Dorsolateral prefrontal cortex (tissue), 120 donors: ENCODE measurements at regions of chr11 and their contacts with region 1.

Region 1: DNA sequence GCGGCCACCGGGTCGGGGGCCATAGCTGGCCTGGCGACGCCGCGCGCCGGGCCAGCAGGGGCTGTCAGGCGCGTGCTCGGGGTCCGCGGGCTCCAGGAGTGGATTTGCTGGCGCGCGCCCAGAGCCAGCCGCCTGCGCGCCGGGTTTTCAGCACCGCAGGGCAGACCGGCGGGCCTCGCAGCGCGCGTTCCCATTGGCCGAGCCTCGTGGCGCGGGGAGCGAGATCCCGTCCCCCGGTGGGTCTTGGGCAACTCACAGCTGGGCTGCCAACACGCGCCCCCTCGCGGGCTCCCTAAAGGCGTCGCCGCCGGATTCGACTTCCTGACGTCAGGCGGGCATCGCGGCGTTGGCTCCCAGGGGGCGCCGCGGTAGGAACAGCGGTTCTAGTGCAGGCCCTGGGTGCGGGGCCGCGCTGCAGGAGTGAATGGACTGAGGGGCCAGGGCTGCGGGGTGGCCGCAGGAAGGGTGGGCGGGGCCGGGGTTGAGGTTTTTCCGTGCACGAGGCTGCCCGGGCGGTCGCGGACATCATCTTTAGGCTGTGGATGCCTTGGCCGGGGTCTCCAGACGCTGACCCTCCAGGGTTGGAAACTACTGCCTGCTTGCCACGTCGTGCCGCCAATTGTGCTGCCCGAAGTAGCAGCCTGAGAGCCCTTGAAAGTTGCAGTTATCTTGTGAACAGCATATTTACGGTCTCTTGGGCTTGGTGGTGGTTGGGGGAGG is at the start of gene FADS1:
- DNase-seq: peak; percentile 78 to 98 (median 95)
- H3K4me3 ChIP-seq: peak within 1 kb of the TSS; percentile 55 to 99 (median 87)
- H3K27ac ChIP-seq: peak within 1 kb of the TSS; percentile 91 to 100 (median 99)
- H3K27me3 ChIP-seq: no peaks in the 10 kb centered on the region
- CTCF ChIP-seq: peak; percentile 42 to 89 (median 71)
- total RNA-seq, gene FADS1: 47.3 to 195 (median 80.7) TPM

Region 2: DNA sequence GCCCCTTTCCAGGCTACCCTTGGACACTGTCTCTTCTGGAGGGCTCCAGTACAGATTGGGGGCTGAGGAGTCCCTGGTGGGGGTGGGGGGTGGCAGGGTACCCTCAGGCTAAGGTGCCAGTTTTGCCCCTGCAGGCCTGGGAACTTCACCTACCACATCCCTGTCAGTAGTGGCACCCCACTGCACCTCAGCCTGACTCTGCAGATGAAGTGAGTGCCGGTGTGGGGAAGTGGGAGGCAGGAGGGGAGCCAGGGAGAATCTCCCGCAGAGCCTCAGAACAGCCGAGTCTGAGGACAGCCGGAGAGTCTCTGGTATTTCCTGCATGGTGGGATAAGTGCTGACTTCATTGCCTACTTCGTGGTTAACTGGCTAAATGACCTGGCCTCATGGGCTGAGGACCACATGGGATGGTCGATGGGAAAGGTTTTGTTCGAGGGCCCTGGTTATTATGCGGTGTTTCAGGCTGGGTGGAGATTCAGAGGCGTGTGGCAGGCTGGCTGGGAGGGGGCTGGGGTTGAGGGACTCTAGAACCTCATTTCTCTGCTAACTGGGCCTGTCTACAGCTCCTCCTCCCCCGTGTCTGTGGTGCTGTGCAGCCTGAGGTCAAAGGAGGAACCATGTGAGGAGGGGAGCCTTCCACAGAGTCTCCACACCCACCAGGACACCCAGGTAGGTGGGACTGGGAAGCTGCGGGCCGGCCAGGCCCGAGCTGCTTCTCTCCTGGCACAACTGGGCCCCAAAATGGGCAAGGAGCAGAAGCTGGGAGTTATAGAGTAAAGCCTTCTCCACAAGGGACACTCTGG is 33.0 kb before region 1 on chr11:
- intact Hi-C with region 1: no loop called
- DNase-seq: no peak
- H3K4me3 ChIP-seq: no peak overlapping the region
- H3K27ac ChIP-seq: peak overlapping the region in 34 of 59 donors; percentile 3 to 99 (median 39)
- H3K27me3 ChIP-seq: no peaks in the 10 kb centered on the region
- CTCF ChIP-seq: no peak

Region 3: DNA sequence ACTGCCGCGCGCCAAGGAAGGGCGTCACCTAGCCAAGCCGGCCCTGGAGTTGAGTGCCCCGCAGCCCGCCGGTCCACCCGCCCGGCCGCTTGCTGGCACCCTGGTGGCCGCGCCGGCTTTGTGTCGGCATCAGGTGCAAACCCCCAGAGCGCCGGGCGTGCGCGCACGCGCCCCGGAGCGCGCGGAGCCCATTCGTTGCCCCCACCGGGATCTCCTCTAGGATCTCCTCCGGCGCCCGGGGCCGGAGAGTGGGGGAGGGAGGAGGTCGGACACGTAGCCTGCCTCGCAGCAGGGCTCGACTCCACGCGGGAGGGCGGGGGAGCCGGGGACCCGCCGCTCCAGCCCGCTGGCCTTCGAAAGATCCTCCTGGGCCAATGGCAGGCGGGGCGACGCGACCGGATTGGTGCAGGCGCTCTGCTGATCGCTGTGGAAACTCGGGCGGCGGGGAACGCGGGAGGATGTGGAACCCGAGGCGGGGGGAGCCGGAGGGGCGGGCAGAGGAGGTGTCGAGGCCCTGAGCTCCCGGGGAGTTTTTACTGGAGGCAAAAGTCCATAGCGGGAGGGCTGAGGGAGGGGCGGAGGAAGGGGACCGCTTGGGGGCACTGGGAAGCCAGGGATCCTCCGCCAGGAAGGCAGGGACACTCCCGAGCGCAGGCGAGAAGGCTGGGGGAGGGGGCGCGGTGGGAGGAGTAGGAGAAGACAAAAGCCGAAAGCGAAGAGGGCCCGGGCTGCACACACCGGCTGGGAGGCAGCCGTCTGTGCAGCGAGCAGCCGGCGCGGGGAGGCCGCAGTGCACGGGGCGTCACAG is 10.9 kb after region 1 on chr11 and contains the start of gene FADS2:
- intact Hi-C with region 1: loop called in 1 of 2 experiments (anchors 1 kb)
- DNase-seq: peak; percentile 78 to 97 (median 94)
- H3K4me3 ChIP-seq: peak within 1 kb of the TSS; percentile 57 to 93 (median 76)
- H3K27ac ChIP-seq: peak within 1 kb of the TSS; percentile 29 to 98 (median 90)
- H3K27me3 ChIP-seq: no peaks in the 10 kb centered on the region
- CTCF ChIP-seq: peak in 11 of 56 donors; percentile 1 to 31 (median 11)
- total RNA-seq, gene FADS2: 72.8 to 347 (median 162) TPM

Region 4: DNA sequence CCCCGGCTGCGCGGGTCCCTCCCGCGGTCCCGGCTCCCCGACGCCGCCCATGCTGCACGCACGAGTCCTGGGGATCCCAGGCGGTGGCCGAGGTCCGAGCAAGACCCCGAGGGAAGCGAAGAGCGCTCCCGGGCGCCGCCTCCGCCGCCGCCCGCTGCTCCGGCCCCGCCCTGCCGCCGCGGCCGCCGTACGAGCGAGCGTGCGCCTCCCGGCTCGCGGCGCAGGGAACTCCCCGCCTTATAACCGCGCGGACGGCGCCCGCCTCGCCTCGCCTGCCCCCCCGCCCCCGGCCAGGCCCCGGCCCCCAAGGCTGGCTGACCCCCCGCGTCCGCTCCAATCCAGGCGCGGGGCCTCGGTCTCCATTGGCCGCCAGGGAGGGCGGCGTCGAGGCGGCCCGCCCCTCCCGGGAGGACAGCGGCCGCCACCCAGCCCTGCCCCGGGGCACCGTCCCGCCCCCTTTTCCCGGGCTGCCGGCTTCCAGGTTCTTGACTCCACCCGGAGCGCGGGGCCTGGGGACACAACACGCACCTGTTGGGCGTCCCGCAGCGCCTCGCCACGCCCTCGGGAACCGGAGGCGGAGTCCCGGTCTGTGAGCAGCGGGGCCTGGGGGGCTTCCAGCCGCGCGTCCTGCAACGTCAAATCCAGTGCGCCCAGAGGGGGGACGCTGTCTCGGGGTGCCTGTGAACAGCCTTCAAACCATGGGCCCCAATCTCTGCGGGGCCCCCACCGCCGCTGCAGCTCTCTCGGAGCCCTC is 74.6 kb after region 1 on chr11 and contains the start of gene FADS3:
- intact Hi-C with region 1: loop called (anchors 1 to 5 kb)
- DNase-seq: peak; percentile 66 to 90 (median 76)
- H3K4me3 ChIP-seq: peak within 1 kb of the TSS; percentile 52 to 97 (median 87)
- H3K27ac ChIP-seq: peak within 1 kb of the TSS; percentile 3 to 96 (median 91)
- H3K27me3 ChIP-seq: no peaks in the 10 kb centered on the region
- CTCF ChIP-seq: peak in 18 of 56 donors; percentile 3 to 59 (median 21)
- total RNA-seq, gene FADS3: 52.0 to 134 (median 87.6) TPM

Region 5: DNA sequence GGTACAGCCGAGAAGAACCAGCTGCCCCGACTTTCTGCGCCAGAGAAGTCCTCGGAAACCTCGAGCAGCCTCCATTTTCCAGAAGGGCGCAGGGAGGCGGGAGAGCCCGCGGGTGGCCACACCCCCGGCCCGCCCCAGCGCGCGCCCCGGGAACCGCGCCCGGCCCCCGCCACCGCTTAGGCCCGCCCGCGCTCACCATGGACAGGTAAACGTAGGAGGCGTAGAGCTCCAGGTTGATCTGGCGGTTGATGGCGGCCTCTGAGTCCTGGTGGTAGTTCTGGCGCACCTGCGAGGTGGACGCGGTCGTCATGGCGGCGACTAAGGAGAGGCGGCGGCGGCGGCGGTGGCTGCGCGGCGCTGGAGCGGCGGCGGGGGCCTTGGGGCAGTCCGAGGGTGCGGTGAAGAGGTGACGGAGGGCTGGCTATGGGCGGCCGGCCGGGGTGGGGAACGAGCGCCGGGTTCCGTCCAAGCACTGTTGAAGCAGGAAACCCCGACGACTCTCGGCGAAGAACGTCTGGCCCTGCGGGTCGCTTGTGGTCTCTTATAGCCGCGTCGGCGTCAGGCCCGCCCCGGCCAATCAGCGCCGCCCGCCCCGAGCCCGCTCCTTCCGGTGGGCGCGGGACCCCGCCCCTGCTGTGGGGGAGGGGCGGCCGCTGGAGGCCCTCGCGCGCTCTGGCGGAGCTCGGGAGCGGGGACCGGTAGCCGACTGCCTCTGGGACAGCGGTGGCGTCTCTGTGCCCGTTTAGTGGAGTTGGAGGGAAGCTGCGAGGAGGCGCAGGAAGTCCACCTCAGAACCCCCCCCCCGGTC is 150.4 kb after region 1 on chr11 and contains the start of gene FTH1:
- intact Hi-C with region 1: loop called in 1 of 2 experiments (anchors 5 kb)
- DNase-seq: peak; percentile 86 to 96 (median 94)
- H3K4me3 ChIP-seq: peak within 1 kb of the TSS; percentile 56 to 100 (median 96)
- H3K27ac ChIP-seq: peak within 1 kb of the TSS; percentile 92 to 100 (median 99)
- H3K27me3 ChIP-seq: no peaks in the 10 kb centered on the region
- CTCF ChIP-seq: peak in 24 of 56 donors; percentile 8 to 49 (median 21)
- total RNA-seq, gene FTH1: 2,016 to 5,225 (median 3,057) TPM